Body of pancreas (tissue), 4 donors: ENCODE measurements at regions of chr5 and their contacts with region 1.

Region 1: DNA sequence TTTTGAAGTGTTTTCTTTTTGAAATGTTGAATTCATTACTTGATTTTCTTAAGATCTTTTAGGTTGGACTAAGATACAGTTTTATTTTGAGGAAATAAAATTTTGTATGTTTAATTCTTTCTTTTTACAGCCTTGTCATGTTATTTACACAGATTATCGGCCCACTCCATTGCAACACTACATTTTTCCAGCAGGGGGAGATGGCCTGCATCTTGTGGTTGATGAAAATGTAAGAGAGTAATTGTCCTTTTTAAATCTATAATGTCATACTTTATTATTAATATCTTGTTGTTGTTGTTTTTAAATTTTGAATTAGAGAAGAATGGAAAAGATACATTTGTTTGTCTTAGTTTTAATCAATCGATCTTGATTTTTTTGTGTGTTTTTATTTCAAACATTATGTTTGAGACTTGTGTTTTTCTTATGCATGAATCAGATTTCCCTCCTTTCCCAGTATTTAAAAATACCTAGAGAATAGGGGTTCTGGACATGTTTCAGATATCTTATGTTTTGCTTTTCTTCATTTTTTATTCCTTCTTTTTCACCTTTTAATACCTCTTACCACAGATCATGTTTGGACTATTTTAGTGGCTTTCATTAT is 36.7 kb downstream of the MTREX start:
- DNase-seq: peak; percentile 59 to 78 (median 66)
- ATAC-seq: peak; percentile 70
- H3K4me3 ChIP-seq: no peak overlapping the region
- H3K27ac ChIP-seq: peak overlapping the region in 1 of 4 donors; percentile 21
- H3K4me1 ChIP-seq: peaks cover 15% of the 10 kb centered on the region
- H3K27me3 ChIP-seq: no peaks in the 10 kb centered on the region
- CTCF ChIP-seq: peak; percentile 60 to 94 (median 84)
- POLR2A ChIP-seq: no peak

Region 2: GRCh38 chr5:55402199-55402598 is 57.7 kb after region 1 on chr5:
- intact Hi-C with region 1: no loop called
- DNase-seq: no peak
- ATAC-seq: no peak
- H3K4me3 ChIP-seq: no peak overlapping the region
- H3K27ac ChIP-seq: no peak overlapping the region
- H3K4me1 ChIP-seq: no peaks in the 10 kb centered on the region
- H3K27me3 ChIP-seq: no peaks in the 10 kb centered on the region
- CTCF ChIP-seq: no peak
- POLR2A ChIP-seq: no peak

Region 3: GRCh38 chr5:55708732-55709131 is 364.2 kb after region 1 on chr5:
- intact Hi-C with region 1: loop called (anchors 10 kb)
- DNase-seq: peak in 3 of 4 donors; percentile 24 to 55 (median 31)
- ATAC-seq: no peak
- H3K4me3 ChIP-seq: no peak overlapping the region
- H3K27ac ChIP-seq: peak overlapping the region in 1 of 4 donors; percentile 13
- H3K4me1 ChIP-seq: peaks cover 39% of the 10 kb centered on the region
- H3K27me3 ChIP-seq: no peaks in the 10 kb centered on the region
- CTCF ChIP-seq: peak in 1 of 7 experiments; percentile 20
- POLR2A ChIP-seq: no peak